PC-3 (cell line): ENCODE measurements at regions of chr13 and their contacts with region 1.

Region 1: DNA sequence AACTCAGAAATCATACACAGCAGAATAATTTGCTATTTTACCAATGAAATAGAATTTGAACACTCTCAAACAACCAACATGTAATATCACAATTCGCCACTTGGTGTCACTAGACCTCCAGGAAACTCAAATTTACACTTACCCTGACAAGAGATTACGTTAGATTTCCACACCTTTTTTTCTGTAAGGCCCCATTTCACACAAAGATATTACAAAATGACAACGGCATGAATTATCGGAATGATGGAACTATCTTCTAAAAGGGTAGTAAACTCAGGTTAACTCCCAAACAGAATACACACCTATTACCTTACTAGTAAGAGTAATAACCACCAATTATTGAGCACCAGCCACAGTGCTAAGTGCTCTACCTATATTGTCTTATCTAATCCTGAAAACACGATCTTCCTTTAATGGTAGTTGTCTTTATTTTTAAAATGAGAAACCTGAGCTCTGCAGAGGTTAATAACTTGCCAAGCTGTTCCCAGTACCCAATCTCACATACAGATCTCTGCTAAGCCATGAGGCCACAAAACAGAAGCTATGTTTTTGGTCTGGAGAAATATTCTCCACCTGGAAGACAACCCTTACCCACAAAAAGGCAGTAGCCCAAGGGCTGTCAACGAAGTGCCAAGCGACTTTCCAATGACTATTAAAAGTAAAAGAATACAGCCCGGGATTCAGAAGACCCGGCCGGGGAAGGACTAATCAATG is 152.4 kb downstream of the DCLK1 start:
- DNase-seq: peak; percentile 72
- ATAC-seq: peak; percentile 46
- H3K4me3 ChIP-seq: no peak overlapping the region
- H3K27ac ChIP-seq: no peak overlapping the region; the same call in 1 of the 2 replicates
- H3K4me1 ChIP-seq: peaks cover 12% of the 10 kb centered on the region
- H3K27me3 ChIP-seq: no peaks in the 10 kb centered on the region
- CTCF ChIP-seq: peak; percentile 80

Region 2: DNA sequence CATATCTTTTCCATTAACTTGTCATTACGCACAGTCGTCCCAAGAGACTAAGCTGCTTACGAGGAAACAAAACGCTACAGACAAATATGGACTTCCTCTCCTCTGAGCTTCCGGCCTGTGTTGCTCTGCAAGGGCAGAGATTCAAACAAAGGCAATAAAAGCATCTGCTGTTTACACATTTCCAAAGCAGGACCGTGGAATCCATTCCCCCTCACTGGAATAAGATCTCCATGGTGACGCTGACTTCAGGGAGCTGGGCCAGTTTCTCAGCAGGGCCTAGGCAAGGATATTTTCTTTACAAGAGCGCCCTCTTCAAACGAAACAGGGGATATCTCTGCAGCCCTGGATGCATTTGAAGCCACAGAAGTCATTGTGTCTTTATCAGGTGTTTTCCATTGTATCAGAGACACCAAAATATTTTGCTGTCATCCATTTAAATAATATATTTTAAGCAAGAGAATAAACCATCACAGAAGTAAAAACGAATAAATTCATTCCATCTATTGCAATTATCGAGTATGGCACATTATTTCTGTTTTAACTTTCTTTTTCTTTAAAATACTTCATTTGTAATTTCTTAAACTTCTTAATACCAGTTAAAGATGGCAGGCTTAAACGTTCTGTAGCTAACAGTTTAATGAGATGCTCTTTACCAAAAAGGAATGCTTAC is 25.1 kb before region 1 on chr13:
- CTCF ChIA-PET with region 1: no interaction called
- POLR2A ChIA-PET with region 1: no interaction called
- intact Hi-C with region 1: no loop called
- DNase-seq: peak; percentile 76
- ATAC-seq: peak; percentile 83
- H3K4me3 ChIP-seq: 0 out of 2 replicates have a peak overlapping the region, but pooled peaks have one; percentile 47
- H3K27ac ChIP-seq: no peak overlapping the region
- H3K4me1 ChIP-seq: peaks cover 12% of the 10 kb centered on the region; the same call in 1 of the 2 replicates
- H3K27me3 ChIP-seq: no peaks in the 10 kb centered on the region
- CTCF ChIP-seq: peak; percentile 80

Region 3: DNA sequence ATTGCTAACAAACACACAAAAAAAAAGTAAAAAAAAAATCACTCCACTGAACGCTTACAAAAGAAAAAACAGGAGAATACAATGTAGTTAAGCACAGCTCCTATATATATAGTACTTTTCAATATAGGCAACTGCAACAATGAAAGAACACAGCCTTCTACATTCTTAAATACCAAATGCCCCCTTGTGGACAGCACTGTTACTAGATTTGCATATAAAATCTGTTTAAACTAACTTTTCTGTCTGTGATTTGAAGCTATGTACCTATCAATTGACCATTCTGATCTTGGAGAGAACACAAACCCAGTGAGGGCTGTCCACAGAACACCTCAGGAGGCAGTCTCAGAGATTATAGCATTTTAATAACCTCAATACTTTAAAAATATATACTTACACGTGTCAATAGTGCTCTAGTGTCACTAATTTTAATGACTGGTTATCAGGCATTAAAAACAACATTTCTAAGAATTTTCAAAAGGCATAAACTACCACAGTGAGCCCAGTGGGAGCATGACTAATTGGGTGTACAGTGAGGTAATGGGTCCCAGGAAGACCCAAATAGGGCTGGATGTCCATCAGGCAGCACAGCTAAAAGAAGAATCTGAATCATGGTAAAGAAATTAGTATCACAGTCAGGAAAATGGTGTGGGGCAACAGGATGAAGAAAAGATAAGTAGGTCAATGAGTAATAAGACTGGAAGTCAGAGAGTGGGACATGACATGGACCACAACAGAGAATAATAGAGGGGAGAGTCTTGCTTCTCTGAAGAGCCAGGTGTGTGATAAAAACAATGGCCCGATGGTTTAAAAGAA is 296.6 kb after region 1 on chr13:
- CTCF ChIA-PET with region 1: interaction called, 10 read pairs
- POLR2A ChIA-PET with region 1: interaction called, 3 read pairs
- intact Hi-C with region 1: loop called (anchors 1 kb)
- DNase-seq: peak; percentile 65
- ATAC-seq: no peak; the same call in 1 of the 2 replicates
- H3K4me3 ChIP-seq: no peak overlapping the region
- H3K27ac ChIP-seq: no peak overlapping the region
- H3K4me1 ChIP-seq: no peaks in the 10 kb centered on the region
- H3K27me3 ChIP-seq: no peaks in the 10 kb centered on the region
- CTCF ChIP-seq: peak; percentile 64

Region 4: GRCh38 chr13:36395280-36395679 is 416.5 kb after region 1 on chr13:
- CTCF ChIA-PET with region 1: no interaction called
- POLR2A ChIA-PET with region 1: no interaction called
- intact Hi-C with region 1: loop called (anchors 5 kb)
- DNase-seq: peak; percentile 44
- ATAC-seq: peak; percentile 78
- H3K4me3 ChIP-seq: no peak overlapping the region
- H3K27ac ChIP-seq: no peak overlapping the region
- H3K4me1 ChIP-seq: no peaks in the 10 kb centered on the region
- H3K27me3 ChIP-seq: no peaks in the 10 kb centered on the region
- CTCF ChIP-seq: peak; percentile 51